ENCODE measurements at regions of chr17 and their contacts with region 1.

Region 1: DNA sequence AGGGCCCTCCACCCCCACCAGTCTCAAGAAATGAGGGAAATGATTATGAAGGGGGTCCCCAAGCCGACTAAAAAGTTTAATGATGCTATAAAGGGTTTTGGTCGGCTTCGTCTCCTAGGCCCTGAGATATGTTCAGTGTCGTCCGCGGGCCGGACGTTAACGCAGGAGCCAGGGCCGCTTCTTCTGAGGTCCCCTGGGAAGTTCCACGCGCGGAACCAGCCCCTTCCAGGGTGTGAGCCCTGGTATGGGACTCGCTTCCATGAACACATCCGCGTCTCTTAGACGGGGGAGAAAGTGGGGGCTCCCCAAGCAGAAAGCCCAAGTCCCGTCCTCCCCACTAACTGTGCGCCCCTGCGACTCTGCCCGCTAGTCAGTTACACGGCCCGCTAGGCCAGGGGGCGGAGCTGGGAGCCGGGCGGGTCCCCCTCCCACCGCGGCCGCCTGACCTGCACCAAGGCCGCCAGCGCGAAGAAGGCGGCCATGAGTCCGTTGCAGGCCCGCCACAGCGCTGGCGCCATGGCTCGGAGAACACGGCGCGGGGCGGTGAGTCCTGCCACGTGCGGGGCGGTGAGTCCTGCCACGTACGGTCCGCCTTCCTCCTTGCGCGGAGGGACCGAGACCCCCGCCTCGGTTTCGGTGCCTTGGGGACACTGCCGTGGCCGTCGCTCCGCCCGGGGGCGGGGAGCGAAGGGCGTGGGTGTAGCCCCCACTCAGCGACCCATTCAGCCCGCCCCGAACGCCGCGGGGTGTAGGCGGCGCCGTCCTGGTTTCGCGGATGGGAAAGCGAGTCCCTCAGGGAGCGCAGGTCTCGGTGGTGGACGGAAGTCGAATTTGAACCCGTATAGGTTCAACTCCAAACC is at the start of gene TMEM220:
- DNase-seq: peak; percentile 94
- H3K4me3 ChIP-seq: peak within 1 kb of the TSS; percentile 74 to 82 (median 78)
- H3K27ac ChIP-seq: peak within 1 kb of the TSS; percentile 95 to 96 (median 95)
- H3K4me1 ChIP-seq: peaks cover 2 to 23% (median 20%) of the 10 kb centered on the region in 4 donors
- H3K27me3 ChIP-seq: no peaks in the 10 kb centered on the region
- CTCF ChIP-seq: no peak
- EP300 ChIP-seq: no peak
- POLR2A ChIP-seq: peak; percentile 26
- total RNA-seq, gene TMEM220: 7.5 to 15.4 (median 11.1) TPM

Region 2: DNA sequence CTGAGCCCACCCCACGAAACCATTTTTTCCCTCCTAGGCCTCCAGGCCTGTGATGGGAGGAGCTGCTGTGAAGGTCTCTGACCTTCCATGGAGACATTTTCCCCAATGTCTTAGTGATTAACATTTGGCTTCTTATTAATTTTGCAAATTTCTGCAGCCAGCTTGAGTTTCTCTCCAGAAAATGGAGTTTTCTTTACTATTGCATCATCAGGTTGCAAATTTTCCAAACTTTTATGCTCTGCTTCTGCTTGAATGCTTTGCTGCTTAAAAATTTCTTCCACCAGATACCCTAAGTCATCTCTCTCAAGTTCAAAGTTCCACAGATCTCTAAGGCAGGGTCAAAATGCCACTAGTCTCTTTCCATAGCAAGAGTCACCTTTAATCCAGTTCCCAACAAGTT is 247.3 kb before region 1 on chr17:
- intact Hi-C with region 1: no loop called
- DNase-seq: no peak
- H3K4me3 ChIP-seq: no peak overlapping the region
- H3K27ac ChIP-seq: no peak overlapping the region
- H3K4me1 ChIP-seq: no peaks in the 10 kb centered on the region
- H3K27me3 ChIP-seq: no peaks in the 10 kb centered on the region
- CTCF ChIP-seq: no peak
- EP300 ChIP-seq: no peak
- POLR2A ChIP-seq: no peak

Region 3: DNA sequence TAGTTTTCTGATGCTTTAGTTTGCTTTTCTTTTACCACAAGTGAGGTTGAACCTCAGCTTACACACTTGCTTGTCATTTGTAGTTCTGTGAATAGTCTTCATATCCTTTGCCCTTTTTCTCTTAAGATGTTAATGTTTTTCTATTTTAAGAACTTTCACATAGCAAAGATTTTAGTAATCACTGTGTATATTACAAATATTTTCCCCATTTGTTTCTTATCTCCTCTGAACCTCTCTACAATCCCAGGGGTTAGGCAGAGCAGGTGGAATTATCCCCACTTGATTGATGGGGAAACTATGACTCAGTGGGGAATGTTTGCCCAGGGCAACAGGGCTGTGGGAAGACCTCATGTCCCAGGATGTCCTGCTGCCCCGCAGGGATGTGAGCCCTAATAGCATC is 60.8 kb before region 1 on chr17:
- intact Hi-C with region 1: no loop called
- DNase-seq: no peak
- H3K4me3 ChIP-seq: no peak overlapping the region
- H3K27ac ChIP-seq: no peak overlapping the region
- H3K4me1 ChIP-seq: no peaks in the 10 kb centered on the region
- H3K27me3 ChIP-seq: no peaks in the 10 kb centered on the region
- CTCF ChIP-seq: no peak
- EP300 ChIP-seq: no peak
- POLR2A ChIP-seq: no peak

Region 4: DNA sequence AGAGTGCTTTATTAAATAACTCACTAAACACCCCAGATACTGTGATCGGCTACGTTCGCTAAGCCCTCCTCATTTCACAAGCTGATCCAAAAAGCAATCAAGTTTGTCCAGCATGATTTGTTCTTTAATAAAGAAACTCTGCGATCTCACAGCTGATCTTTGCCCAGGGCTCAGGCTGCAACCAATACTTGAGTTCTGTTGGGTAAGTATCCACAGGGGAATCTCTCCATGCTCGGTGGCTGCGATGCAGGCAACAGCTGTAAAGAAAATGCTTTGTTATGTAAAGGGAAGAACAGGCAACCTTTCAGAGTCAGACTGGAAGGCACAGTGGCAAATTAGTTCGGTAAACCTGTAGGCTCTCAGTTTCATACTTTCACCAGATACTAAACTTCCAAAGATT is 579.0 kb after region 1 on chr17:
- intact Hi-C with region 1: loop called (anchors 5 kb)
- DNase-seq: peak; percentile 78
- H3K4me3 ChIP-seq: no peak overlapping the region
- H3K27ac ChIP-seq: no peak overlapping the region
- H3K4me1 ChIP-seq: peaks cover 0 to 10% (median 3%) of the 10 kb centered on the region in 4 donors
- H3K27me3 ChIP-seq: peaks cover 0 to 4% (median 0%) of the 10 kb centered on the region in 4 donors
- CTCF ChIP-seq: no peak
- EP300 ChIP-seq: no peak
- POLR2A ChIP-seq: no peak

Measured in esophagus muscularis mucosa (tissue), 4 donors.